Left lung (tissue), 14 donors: ENCODE measurements at regions of chr10 and their contacts with region 1.

Region 1: DNA sequence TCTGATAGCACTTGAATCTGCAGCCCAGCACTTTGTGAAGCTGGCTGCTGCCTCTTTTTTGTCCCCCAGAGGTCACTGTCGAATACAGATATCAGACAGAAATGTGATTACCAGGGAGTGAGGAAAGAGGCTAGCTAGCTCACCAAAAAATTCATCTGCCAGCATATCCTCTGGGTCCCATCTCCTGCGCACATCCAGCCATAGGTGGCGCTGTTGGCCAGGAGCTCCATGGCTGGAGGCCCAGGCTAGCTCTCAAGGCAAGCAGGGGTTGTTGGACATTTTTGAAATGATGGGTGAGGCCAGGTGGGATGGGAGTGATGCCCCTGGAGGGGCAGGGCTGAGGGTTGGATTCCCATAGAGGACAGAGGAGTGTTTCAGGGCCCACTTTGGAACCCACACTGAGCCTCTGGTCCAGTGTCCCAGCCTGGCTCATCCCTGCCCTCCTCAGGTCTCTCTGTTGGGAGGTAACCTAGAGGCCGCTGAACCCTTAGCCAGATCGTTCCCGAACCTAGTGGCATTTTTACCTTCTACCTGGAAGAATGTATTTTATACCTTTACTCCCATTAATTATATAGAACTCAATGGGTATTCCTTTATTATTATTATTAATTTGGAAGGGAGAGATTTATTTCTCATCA is 14.8 kb downstream of the DPCD start:
- DNase-seq: peak; percentile 29 to 89 (median 67)
- ATAC-seq: peak; percentile 91
- H3K4me3 ChIP-seq: no peak overlapping the region
- H3K27ac ChIP-seq: no peak overlapping the region
- H3K4me1 ChIP-seq: no peaks in the 10 kb centered on the region
- H3K27me3 ChIP-seq: no peaks in the 10 kb centered on the region
- CTCF ChIP-seq: peak; percentile 76 to 83

Region 2: DNA sequence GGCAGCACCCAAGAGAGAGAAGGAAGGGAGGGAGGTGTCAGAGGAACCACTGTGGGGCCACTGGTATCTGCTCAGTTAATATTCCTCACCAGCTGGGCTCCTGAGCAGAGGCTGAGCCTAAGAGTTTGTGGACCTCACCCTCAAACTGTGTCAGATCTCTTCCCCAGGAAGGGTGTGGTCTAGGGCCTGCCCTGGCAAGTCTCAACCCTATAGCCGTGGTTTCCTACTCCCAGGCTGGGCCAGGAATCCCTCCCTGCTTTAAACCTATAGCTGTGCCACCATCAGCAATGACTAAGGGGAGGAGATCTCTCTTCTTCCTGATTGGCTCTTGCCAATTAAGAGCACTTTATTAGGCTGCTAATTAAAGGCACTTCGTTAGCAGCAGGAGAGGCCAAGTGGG is 44.7 kb before region 1 on chr10:
- intact Hi-C with region 1: no loop called
- DNase-seq: no peak
- ATAC-seq: no peak
- H3K4me3 ChIP-seq: no peak overlapping the region
- H3K27ac ChIP-seq: no peak overlapping the region
- H3K4me1 ChIP-seq: no peaks in the 10 kb centered on the region
- H3K27me3 ChIP-seq: peaks cover 0 to 36% of the 10 kb centered on the region in 2 donors
- CTCF ChIP-seq: no peak

Region 3: DNA sequence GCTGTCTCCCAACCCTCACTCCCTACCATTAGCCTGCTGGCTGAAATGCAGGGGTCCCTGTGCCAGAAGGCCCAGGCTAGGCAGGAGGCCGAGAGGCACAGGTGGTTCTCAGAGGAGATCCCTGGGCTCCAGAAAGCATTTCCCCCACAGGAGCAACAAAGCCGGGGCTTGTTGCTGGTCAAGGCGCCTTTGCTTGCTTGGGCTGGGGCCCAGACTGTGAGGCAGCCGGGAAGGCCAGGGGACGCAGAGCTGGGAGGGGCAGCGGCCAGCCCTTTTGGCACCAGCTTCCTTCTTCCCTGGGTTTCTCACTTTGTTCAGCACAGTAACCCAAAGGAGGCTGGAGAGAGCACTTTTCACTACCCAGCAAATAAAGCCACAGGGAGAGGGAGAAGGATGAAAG is 43.5 kb after region 1 on chr10:
- intact Hi-C with region 1: no loop called
- DNase-seq: no peak
- ATAC-seq: no peak
- H3K4me3 ChIP-seq: no peak overlapping the region
- H3K27ac ChIP-seq: no peak overlapping the region
- H3K4me1 ChIP-seq: no peaks in the 10 kb centered on the region
- H3K27me3 ChIP-seq: no peaks in the 10 kb centered on the region
- CTCF ChIP-seq: no peak

Region 4: GRCh38 chr10:101779544-101780186 is 176.8 kb after region 1 on chr10:
- intact Hi-C with region 1: loop called in 1 of 2 experiments (anchors 10 kb)
- DNase-seq: peak; percentile 50 to 98 (median 76)
- ATAC-seq: peak; percentile 81
- H3K4me3 ChIP-seq: peak overlapping the region; percentile 24 to 40
- H3K27ac ChIP-seq: no peak overlapping the region
- H3K4me1 ChIP-seq: peaks cover 23 to 76% of the 10 kb centered on the region in 2 donors
- H3K27me3 ChIP-seq: peaks cover 23 to 57% of the 10 kb centered on the region in 2 donors
- CTCF ChIP-seq: peak; percentile 87 to 92